ENCODE measurements at regions of chr3 and their contacts with region 1.

Region 1: DNA sequence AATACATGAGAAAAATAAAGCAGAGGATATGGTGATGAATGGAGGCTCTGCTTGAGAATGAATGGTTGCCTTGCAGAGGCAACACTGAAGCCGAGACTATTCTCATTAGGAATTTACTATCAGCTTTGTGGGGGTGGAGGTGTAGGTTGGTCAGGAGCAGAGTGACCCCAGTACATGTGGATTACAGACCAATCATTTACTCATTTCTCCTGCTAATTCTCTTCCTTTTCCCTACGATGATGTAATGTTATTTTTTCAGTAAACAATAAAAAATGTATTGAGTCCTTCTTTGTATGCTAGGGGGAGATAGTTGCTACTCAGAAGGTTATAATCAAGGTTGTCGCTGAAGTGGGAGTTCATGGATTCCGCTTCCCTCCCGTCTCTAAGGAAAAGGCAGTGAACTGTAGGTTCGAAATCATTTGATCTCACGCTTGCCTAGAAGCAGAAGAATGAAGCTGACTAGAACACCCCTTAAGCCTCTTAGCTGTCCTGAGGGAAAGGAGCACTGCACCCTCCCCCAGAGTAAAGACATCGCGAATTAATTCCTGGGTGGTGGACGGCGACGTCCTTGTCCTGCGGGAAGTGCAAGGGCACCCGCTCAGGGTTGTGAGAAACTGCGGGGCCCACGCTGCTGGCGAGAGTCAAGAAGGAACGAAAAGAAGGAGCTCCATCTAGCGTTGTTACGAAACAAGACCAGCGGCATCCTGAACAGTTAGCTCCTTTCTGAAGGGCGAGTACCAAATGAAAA is 213.2 kb upstream of the PFN2 start:
- DNase-seq: peak; percentile 72 to 77
- H3K4me3 ChIP-seq: peak overlapping the region in 1 of 3 donors; percentile 0
- H3K27ac ChIP-seq: peak overlapping the region in 1 of 3 donors; percentile 4
- H3K4me1 ChIP-seq: no peaks in the 10 kb centered on the region
- H3K27me3 ChIP-seq: no peaks in the 10 kb centered on the region
- CTCF ChIP-seq: peak in 5 of 6 experiments; percentile 44 to 80 (median 68)
- POLR2A ChIP-seq: no peak

Region 2: DNA sequence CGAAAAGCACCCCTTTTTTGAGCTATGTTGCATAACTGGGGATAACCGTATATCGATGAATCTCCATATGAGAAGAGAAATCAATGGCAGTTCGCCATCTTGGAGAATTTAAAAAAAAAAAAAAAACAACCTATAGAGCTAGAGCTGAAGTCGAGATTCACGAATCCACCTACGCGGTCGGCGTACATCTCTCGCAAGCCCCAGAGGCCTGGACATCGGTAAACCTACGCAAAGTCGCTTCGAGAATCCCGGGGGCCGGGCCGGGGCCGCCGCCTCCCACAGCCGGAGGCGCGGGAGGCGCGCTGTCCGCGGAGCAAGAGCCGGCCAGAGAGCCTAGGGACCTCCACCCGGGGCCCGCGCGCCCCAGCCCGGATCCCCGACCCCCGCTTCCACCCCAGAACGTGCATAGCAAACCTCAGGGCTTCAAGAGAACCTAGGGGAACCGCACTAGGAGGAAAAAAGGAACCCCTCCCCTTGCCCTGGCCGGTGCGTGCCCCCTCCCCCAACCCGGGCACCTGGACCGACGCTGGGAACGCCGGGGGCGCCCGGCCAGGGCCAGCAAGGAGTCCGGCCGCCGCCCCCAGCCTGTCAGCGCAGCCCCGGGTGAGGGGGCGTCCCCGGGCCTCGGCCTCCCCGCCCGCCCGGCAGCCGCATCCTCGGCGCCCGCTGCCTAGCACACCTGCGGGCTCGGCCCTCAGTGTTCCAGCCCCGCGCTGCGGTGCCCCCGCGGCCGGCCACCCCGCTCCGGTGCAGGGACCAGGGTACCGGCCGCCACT is 213.7 kb before region 1 on chr3:
- intact Hi-C with region 1: loop called (anchors 5 kb)
- DNase-seq: peak; percentile 88 to 90
- H3K4me3 ChIP-seq: peak overlapping the region; percentile 78 to 88 (median 83)
- H3K27ac ChIP-seq: peak overlapping the region; percentile 86 to 92 (median 88)
- H3K4me1 ChIP-seq: peaks cover 6 to 12% of the 10 kb centered on the region in 2 donors
- H3K27me3 ChIP-seq: no peaks in the 10 kb centered on the region
- CTCF ChIP-seq: no peak
- POLR2A ChIP-seq: peak in 1 of 2 donors; percentile 39